GM10248 (cell line): ENCODE measurements at regions of chr5 and their contacts with region 1.

Region 1: DNA sequence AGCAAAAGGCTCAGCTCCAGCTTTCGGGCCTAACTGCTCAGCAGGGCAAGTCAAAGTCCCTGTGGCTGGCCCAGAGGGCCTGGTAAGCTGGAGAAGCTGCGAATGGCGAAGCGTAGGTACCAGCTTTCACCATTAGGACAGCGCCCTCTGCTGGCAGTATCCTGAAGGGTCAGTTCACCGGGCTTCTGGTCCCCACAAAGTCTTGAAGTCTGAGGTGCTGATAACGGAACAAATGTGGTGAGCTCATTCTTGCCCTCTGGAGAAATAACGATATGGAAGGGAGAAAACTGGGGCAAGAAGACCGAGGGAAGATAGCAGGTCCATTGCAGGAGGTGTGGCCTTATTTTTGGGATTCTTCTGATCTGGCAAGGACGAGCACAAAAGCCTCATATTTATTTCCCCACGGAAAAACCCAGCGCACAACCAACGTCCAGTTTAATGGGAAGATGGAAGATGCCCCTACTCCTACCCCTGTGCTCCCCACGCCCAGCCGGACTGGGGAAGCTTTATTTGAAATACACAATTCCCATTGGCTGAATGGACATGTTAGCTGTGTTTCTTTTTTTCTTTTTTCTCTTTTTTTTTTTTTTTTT is 7.2 kb downstream of the SOWAHA start:
- DNase-seq: peak; percentile 90
- CTCF ChIP-seq: peak; percentile 88

Region 2: GRCh38 chr5:132500931-132501630 is 319.2 kb before region 1 on chr5:
- CTCF ChIA-PET with region 1: interaction called, 90 read pairs
- POLR2A ChIA-PET with region 1: no interaction called
- DNase-seq: peak; percentile 84
- CTCF ChIP-seq: peak; percentile 71

Region 3: GRCh38 chr5:132586063-132586462 is 234.2 kb before region 1 on chr5:
- CTCF ChIA-PET with region 1: interaction called, 17 read pairs
- POLR2A ChIA-PET with region 1: no interaction called
- DNase-seq: no peak
- CTCF ChIP-seq: no peak

Region 4: GRCh38 chr5:132736853-132737833 is 83.1 kb before region 1 on chr5 and contains the start of gene KIF3A:
- CTCF ChIA-PET with region 1: interaction called, 11 read pairs
- POLR2A ChIA-PET with region 1: no interaction called
- DNase-seq: peak; percentile 100
- CTCF ChIP-seq: no peak

Region 5: DNA sequence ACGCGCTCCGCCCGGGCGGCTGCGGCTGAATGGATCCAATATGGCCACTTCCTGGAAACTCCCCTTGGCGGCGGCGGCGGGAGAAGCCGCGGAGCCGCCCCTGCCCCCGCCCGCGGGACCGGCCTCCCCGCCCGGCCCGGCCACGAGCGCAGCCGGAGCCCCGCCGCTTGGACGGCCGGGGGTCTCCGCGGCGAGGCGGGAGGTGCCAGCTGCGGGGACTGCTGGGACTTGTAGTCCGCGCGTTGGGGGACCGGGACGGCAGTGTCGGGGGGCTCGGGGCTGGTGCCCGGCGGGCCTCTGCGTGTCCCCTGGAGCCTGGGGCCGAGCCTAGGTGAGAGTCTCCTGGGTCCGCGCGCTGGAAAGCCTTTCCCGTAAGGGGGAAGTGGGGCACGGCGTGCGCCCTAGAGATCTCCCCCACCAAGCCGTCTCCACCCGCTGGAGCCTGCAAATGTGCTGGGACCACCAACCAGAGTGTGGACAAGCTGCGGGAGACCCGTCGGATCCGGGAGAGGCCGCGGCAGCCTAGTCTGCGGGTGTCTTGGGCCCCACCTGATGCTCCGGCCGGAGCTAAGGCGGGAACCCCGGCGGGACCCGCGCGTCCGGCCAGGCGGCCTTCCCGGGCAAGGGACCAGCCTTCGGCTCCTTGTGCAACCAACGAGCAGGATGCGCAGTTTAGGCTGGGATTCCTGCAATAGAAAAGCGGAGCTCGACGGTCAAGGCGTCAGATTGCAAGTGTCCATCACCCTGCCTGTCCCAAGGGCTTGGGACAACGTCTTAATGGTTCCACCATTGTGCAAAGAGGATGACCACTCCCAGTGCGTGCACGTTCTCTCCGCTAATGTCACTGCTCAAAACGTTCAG is 42.8 kb before region 1 on chr5 and contains the start of gene SEPTIN8:
- CTCF ChIA-PET with region 1: interaction called, 14 read pairs
- POLR2A ChIA-PET with region 1: no interaction called
- DNase-seq: peak; percentile 82
- CTCF ChIP-seq: no peak

Region 6: GRCh38 chr5:132797651-132798050 is 22.6 kb before region 1 on chr5:
- CTCF ChIA-PET with region 1: interaction called, 20 read pairs
- POLR2A ChIA-PET with region 1: no interaction called
- DNase-seq: no peak
- CTCF ChIP-seq: no peak

Region 7: GRCh38 chr5:132850066-132850465 is 29.8 kb after region 1 on chr5:
- CTCF ChIA-PET with region 1: interaction called, 215 read pairs
- POLR2A ChIA-PET with region 1: no interaction called
- DNase-seq: no peak
- CTCF ChIP-seq: no peak

Region 8: GRCh38 chr5:133015466-133015865 is 195.2 kb after region 1 on chr5:
- CTCF ChIA-PET with region 1: no interaction called
- POLR2A ChIA-PET with region 1: no interaction called
- DNase-seq: no peak
- CTCF ChIP-seq: no peak